IMR-90 (cell line): ENCODE measurements at regions of chr2 and their contacts with region 1.

Region 1: GRCh38 chr2:62266433-62267038 is 70.6 kb downstream of the B3GNT2 start:
- DNase-seq: peak; percentile 76
- ATAC-seq: peak; percentile 91
- H3K4me3 ChIP-seq: no peak overlapping the region
- H3K27ac ChIP-seq: no peak overlapping the region
- H3K4me1 ChIP-seq: peaks cover 2% of the 10 kb centered on the region; the same call in 1 of the 2 replicates
- H3K27me3 ChIP-seq: no peaks in the 10 kb centered on the region
- CTCF ChIP-seq: no peak
- POLR2A ChIP-seq: no peak
- RAD21 ChIP-seq: no peak

Region 2: DNA sequence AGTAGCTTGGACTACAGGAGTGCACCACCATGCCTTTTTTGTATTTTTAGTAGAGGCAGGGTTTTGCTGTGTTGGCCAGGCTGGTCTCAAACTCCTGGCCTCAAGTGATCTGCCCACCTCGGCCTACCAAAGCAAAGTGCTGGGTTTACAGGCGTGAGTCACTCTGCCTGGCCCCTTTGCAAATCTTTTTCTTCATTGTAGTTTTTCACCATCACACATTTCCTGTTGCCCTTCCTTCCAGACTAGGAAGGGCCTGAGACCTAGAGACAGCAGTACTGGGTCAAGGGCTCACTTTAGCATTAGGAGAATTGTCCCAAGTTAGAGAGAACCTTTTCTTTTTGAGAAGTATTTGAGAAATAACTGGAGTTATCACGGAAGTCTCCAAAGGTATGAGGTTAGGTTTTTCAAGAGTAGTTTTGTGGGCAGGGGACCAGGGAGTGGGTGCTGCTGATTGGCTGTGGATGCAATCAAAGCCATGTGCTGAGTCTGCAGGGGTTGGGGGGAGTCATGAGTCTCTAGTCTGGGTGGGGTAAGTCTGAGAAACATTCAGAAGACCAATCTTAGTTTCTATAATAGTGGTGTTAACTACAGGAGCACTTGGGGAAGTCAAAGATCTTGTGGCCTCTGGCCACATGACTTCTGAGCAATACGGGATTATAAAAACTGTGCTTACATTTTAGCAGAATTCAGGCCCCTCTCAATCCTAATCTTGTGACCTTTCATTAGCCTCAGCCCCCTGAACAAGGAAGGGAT is 47.0 kb before region 1 on chr2:
- CTCF ChIA-PET with region 1: no interaction called
- POLR2A ChIA-PET with region 1: no interaction called
- dilution Hi-C with region 1: no loop called
- in situ Hi-C with region 1: no loop called
- intact Hi-C with region 1: loop called (anchors 1 kb)
- DNase-seq: no peak
- ATAC-seq: no peak
- H3K4me3 ChIP-seq: no peak overlapping the region
- H3K27ac ChIP-seq: no peak overlapping the region
- H3K4me1 ChIP-seq: peaks cover 25% of the 10 kb centered on the region
- H3K27me3 ChIP-seq: no peaks in the 10 kb centered on the region
- CTCF ChIP-seq: no peak
- POLR2A ChIP-seq: no peak
- RAD21 ChIP-seq: no peak